A673 (cell line): ENCODE measurements at regions of chr14 and their contacts with region 1.

Region 1: DNA sequence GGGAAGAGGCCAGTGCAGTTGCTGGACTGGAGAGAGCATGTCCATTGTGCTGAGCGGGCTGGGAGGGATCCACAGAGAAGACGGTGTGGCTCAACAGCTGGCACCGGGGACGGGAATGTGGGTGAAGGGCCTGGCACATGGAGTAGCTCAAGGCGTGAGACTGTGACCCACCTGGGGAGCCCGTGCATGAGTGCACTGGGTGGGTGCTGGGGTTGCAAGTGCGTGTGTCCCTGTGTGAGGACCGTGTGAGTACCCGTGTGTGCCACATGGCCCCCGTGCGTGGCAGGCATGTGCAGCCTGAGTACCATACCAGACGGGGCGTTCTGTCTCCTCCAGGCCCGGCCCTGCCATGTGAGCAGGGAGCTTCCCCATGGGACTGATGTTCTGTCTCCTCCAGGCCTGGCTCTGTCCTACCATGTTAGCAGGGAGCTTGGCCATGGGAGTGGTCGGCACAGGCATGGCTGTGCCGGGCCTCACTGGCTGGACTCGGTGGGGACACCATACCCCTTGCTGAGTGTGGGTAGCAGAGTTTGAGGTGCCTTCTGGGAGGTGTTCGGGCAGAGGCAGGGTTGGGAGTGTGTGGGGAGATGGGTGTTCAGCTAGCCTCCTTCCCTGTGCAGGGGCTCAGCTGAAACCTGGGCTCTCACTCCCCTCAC is 234.4 kb downstream of the TMEM121 start:
- DNase-seq: no peak
- H3K4me3 ChIP-seq: no peak overlapping the region
- H3K27ac ChIP-seq: no peak overlapping the region
- H3K4me1 ChIP-seq: no peaks in the 10 kb centered on the region
- H3K27me3 ChIP-seq: no peaks in the 10 kb centered on the region
- CTCF ChIP-seq: no peak

Region 2: DNA sequence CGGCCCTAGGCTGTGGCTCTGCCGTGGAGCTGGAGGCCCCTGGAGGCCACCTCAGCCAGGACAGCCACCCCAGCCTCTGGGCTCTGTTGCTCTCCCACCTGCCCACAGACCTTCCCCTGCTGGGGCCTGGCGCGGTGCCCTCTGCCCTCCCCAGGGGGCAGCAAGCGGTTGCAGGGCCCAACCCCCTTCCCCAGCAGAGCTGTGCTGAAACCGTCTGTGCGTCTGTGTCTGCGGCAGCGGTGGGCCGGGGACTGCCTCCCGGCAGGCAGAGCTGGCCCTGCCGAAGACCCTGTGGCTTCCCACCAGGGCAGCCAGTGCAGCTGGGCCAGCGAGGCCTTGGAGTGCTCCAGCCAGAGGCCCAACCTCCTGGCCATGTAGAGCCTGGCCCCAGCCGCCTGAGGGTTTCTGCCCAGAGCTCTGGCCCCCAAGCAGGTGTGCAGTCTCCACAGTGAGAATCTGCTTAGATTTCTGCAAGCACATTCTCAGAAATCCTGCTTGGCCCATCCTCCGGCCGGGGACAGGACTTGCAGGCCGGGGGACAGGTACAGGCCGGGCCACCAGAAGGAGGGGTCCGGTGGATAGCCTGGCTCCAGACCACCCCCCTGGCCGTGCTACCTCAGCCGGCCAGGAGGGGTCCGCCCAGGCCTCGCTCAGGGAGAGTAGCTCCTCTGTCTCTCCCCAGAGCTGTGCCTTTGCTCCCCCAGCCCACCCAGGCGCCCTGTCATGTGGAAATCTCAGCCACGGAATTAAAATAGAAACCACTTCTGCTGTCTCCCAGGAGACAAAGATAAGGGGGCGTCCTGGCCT is 289.8 kb before region 1 on chr14:
- CTCF ChIA-PET with region 1: no interaction called
- POLR2A ChIA-PET with region 1: no interaction called
- intact Hi-C with region 1: no loop called
- DNase-seq: peak; percentile 59
- H3K4me3 ChIP-seq: no peak overlapping the region
- H3K27ac ChIP-seq: peak overlapping the region; percentile 77
- H3K4me1 ChIP-seq: peaks cover 46% of the 10 kb centered on the region
- H3K27me3 ChIP-seq: no peaks in the 10 kb centered on the region
- CTCF ChIP-seq: peak; percentile 27; the same call in 1 of the 2 replicates

Region 3: GRCh38 chr14:105617201-105617777 is 143.5 kb before region 1 on chr14:
- CTCF ChIA-PET with region 1: no interaction called
- POLR2A ChIA-PET with region 1: no interaction called
- intact Hi-C with region 1: loop called (anchors 5 kb)
- DNase-seq: no peak
- H3K4me3 ChIP-seq: no peak overlapping the region
- H3K27ac ChIP-seq: no peak overlapping the region
- H3K4me1 ChIP-seq: no peaks in the 10 kb centered on the region
- H3K27me3 ChIP-seq: no peaks in the 10 kb centered on the region
- CTCF ChIP-seq: no peak